Activated T-helper 2 cell treated with anti-CD3 and anti-CD28 coated beads, Interferon-gamma antibody, Interleukin-2, Interleukin-4, amounts not matched to agents 10 μg/mL and 5 μg/mL and 100 μg/mL, durations not matched to agents 14 hours and 24 hours and 36 hours (primary cell): ENCODE measurements at regions of chr6 and their contacts with region 1.

Region 1: GRCh38 chr6:125956506-125957390 is at the start of gene HINT3:
- DNase-seq: peak; percentile 96
- H3K4me3 Mint-ChIP-seq: peak within 1 kb of the TSS; percentile 52
- H3K27ac Mint-ChIP-seq: peak within 1 kb of the TSS; percentile 68
- H3K4me1 Mint-ChIP-seq: peaks cover 6% of the 10 kb centered on the region
- H3K27me3 Mint-ChIP-seq: peaks cover 1% of the 10 kb centered on the region
- total RNA-seq, gene HINT3: 7.1 and 7.9 TPM in 2 replicates

Region 2: GRCh38 chr6:125301435-125302391 is 655.0 kb before region 1 on chr6 and contains the start of gene HDDC2:
- intact Hi-C with region 1: loop called (anchors 10 kb)
- DNase-seq: peak; percentile 28
- H3K4me3 Mint-ChIP-seq: peak within 1 kb of the TSS; percentile 93
- H3K27ac Mint-ChIP-seq: peak within 1 kb of the TSS; percentile 91
- H3K4me1 Mint-ChIP-seq: peaks cover 33% of the 10 kb centered on the region
- H3K27me3 Mint-ChIP-seq: peaks cover 26% of the 10 kb centered on the region
- total RNA-seq, gene HDDC2: 78.3 and 80.7 TPM in 2 replicates

Region 3: DNA sequence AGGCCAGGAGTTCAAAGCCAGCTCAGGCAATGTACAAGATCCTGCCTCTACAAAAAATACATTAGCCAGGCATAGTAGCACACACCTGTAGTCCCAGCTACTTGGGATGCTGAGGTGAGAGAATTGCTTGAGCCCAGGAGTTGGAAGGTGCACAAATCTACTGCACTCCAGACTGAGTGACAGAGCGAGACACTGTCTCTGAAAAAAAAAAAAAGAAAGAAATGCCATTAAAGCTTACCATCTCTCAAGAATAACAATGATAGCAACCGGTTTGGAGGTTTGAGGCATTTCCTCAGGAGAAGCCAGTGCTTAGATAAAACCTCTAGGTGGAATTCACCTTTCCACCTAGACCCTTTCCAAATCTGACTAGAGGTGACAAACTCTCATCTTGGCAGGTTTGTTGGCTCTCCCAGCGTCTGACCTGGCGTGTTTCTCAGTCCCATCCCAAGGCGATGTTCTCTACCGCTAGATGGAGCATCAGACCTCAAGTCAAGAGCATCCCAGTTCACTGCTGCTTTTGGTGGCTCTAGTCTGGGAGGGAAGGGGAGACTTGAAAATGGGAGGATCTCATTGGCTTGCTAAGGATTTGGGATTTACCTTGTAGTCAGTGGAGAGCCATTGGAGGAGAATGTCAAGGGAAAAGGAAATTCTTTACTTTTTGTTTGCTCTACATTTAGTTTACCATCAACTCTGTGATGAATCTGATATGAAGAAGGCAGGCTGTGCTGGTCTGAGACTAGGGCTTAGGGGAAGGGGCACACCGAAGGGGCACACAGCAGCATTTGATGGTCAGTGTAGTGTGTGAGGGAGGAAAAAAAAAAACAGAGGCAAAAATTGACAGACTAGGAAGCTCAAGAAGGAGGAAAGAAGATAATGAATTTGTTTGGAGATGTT is 98.1 kb before region 1 on chr6:
- intact Hi-C with region 1: loop called (anchors 1 kb)
- DNase-seq: no peak
- H3K4me3 Mint-ChIP-seq: no peak overlapping the region
- H3K27ac Mint-ChIP-seq: no peak overlapping the region
- H3K4me1 Mint-ChIP-seq: peaks cover 3% of the 10 kb centered on the region
- H3K27me3 Mint-ChIP-seq: no peaks in the 10 kb centered on the region

Region 4: GRCh38 chr6:125918681-125919566 is 37.8 kb before region 1 on chr6:
- intact Hi-C with region 1: loop called (anchors 1 kb)
- DNase-seq: peak; percentile 48
- H3K4me3 Mint-ChIP-seq: peak overlapping the region; percentile 82
- H3K27ac Mint-ChIP-seq: peak overlapping the region; percentile 88
- H3K4me1 Mint-ChIP-seq: peaks cover 46% of the 10 kb centered on the region
- H3K27me3 Mint-ChIP-seq: no peaks in the 10 kb centered on the region

Region 5: DNA sequence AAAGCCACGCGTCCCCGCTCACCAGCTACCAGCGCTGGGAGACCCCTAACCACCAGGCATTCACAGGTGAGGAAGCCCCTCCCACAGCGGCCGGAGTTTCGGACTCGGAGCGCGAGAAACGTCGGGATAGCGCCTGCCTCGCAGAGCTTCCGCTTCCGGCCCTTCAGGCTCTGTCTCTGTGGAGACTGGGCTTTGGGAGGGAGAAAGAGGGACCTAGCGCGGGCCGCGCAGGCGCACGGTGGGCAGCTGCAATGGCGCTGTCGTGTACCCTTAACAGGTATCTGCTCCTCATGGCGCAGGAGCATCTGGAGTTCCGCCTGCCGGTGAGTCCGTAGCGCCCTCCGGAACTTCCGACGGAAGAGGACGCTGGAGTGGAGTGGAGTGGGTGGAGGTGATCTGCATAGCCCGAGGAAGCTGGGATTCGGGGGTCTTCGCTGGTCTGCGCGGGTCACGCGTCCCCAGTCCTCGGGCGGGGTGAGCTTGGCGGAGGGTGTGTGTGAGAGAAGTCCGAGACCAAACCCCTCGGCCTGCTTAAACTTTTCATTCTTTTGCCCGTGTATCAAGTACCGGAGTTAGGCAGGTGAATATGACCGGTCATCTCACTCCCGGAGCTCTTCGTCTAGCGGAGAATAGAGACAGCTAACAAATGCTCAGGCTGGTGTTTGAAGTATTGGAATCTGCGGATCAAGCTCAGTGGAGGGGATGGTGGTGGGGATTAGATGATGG is 29.7 kb after region 1 on chr6 and contains the start of gene TRMT11:
- intact Hi-C with region 1: loop called (anchors 2 kb)
- DNase-seq: peak; percentile 69
- H3K4me3 Mint-ChIP-seq: peak within 1 kb of the TSS; percentile 9
- H3K27ac Mint-ChIP-seq: no peak within 1 kb of the TSS
- H3K4me1 Mint-ChIP-seq: peaks cover 9% of the 10 kb centered on the region
- H3K27me3 Mint-ChIP-seq: no peaks in the 10 kb centered on the region
- total RNA-seq, gene TRMT11: 23.9 and 25.4 TPM in 2 replicates

Region 6: DNA sequence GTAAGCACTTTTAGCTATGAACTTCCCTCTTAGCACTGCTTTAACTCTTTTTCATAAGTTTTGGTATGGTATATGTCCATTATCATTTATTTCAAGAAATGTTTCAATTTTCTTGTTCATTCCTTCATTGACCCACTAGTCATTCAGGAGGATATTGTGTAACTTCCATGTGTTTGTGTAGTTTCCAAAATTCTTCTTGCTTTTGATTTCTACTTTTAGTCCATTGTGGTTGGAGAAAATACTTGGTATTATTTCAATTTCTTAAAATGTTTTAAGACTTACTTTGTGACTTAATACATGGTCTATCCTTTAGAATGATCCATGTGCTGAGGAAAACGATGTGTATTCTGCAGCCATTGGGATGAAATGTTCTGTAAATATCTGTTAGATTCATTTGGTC is 559.7 kb after region 1 on chr6:
- intact Hi-C with region 1: no loop called
- DNase-seq: no peak
- H3K4me3 Mint-ChIP-seq: no peak overlapping the region
- H3K27ac Mint-ChIP-seq: no peak overlapping the region
- H3K4me1 Mint-ChIP-seq: no peaks in the 10 kb centered on the region
- H3K27me3 Mint-ChIP-seq: no peaks in the 10 kb centered on the region